Activated naive CD4-positive, alpha-beta T cell treated with anti-CD3 and anti-CD28 coated beads for 36 hours (primary cell): ENCODE measurements at regions of chr19 and their contacts with region 1.

Region 1: DNA sequence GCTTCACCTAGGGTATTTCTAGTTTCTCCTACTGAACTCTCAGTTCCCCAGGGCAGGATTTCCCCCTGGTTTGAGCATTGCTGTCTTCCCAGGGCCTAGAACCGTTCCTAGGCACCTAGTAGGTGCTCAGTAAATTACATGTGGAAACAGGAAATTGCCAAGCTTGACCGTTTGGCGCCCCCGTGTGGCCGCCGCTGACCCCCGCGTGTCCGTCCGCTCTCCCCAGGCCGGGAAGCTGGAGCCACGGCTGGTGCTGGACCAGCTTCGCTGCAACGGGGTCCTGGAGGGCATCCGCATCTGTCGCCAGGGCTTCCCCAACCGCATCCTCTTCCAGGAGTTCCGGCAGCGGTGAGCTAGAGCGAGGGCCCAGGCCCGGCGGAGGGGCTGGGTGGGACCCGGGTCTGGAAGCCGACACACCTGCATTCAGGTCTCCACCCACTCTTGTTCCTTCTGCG is 55.5 kb downstream of the MYH14 start:
- DNase-seq: peak; percentile 29
- H3K4me3 Mint-ChIP-seq: no peak overlapping the region
- H3K27ac Mint-ChIP-seq: no peak overlapping the region
- H3K4me1 Mint-ChIP-seq: no peaks in the 10 kb centered on the region
- H3K27me3 Mint-ChIP-seq: peaks cover 27% of the 10 kb centered on the region

Region 2: DNA sequence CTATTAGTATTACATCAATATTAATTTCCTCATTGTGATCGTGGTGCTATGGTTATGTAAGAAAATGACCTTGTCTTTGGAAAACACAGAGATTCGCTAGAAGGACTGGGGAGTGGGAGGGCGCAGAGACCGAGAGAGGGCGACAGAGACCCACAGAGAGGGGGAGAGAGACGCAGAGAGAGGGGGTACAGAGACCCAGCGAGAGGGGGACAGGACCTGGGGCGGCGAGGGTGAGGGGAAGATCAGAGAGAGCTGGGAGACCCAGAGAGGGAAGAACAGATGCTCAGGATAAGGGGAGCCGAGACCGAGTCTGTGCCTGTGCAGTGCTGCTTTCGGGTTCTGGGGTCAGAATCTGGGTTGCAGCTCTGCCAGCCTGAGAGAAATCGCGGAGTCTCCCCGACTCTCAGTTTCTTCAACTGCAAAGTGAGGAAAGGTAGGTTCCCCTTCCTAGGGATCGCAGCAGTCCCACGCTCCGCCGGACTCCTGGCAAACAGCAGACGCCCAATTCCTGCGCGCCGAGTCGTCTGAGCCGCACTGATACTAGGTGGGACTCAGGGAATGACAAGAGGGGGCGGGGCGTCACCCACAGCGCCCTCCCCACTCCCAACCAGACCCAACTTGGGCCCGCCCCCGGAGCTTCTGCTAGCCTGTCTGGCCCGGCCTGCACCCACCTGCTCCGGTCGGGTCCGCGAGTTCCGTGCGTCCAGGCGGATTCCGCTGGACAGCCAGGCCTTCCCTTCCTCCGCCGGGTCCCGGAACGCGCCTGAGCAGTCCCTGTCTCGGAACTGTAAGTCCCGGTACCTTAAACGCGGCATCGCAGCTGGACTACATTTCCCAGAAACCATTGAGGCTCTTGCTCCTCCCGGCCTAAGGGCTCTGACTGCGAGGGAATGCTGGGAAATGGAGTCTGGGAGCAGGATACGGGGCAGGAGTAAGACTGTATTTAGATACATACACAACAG is 111.2 kb before region 1 on chr19:
- CTCF ChIA-PET with region 1: interaction called, 13 read pairs
- intact Hi-C with region 1: no loop called
- DNase-seq: peak; percentile 85
- H3K4me3 Mint-ChIP-seq: peak overlapping the region; percentile 68
- H3K27ac Mint-ChIP-seq: no peak overlapping the region
- H3K4me1 Mint-ChIP-seq: peaks cover 3% of the 10 kb centered on the region
- H3K27me3 Mint-ChIP-seq: peaks cover 9% of the 10 kb centered on the region

Region 3: GRCh38 chr19:50224986-50225747 is 33.8 kb before region 1 on chr19:
- CTCF ChIA-PET with region 1: no interaction called
- intact Hi-C with region 1: no loop called
- DNase-seq: no peak
- H3K4me3 Mint-ChIP-seq: no peak overlapping the region
- H3K27ac Mint-ChIP-seq: no peak overlapping the region
- H3K4me1 Mint-ChIP-seq: no peaks in the 10 kb centered on the region
- H3K27me3 Mint-ChIP-seq: peaks cover 5% of the 10 kb centered on the region

Region 4: GRCh38 chr19:50290011-50290410 is 31.1 kb after region 1 on chr19:
- CTCF ChIA-PET with region 1: no interaction called
- intact Hi-C with region 1: no loop called
- DNase-seq: no peak
- H3K4me3 Mint-ChIP-seq: no peak overlapping the region
- H3K27ac Mint-ChIP-seq: no peak overlapping the region
- H3K4me1 Mint-ChIP-seq: no peaks in the 10 kb centered on the region
- H3K27me3 Mint-ChIP-seq: peaks cover 38% of the 10 kb centered on the region